Activated CD4-positive, alpha-beta T cell treated with anti-CD3 and anti-CD28 coated beads, Interleukin-2, amount 10 ng/mL, durations not matched to agents 24 days and 14 days (primary cell): ENCODE measurements at regions of chr17 and their contacts with region 1.

Region 1: GRCh38 chr17:3827124-3827773 is 18.8 kb downstream of the NCBP3 start:
- DNase-seq: peak; percentile 91
- H3K4me3 Mint-ChIP-seq: no peak overlapping the region
- H3K27ac Mint-ChIP-seq: no peak overlapping the region
- H3K4me1 Mint-ChIP-seq: peaks cover 11% of the 10 kb centered on the region
- H3K27me3 Mint-ChIP-seq: no peaks in the 10 kb centered on the region

Region 2: GRCh38 chr17:3683054-3683511 is 144.2 kb before region 1 on chr17:
- intact Hi-C with region 1: loop called (anchors 5 kb)
- DNase-seq: peak; percentile 88
- H3K4me3 Mint-ChIP-seq: no peak overlapping the region
- H3K27ac Mint-ChIP-seq: peak overlapping the region; percentile 26
- H3K4me1 Mint-ChIP-seq: peaks cover 22% of the 10 kb centered on the region
- H3K27me3 Mint-ChIP-seq: no peaks in the 10 kb centered on the region

Region 3: DNA sequence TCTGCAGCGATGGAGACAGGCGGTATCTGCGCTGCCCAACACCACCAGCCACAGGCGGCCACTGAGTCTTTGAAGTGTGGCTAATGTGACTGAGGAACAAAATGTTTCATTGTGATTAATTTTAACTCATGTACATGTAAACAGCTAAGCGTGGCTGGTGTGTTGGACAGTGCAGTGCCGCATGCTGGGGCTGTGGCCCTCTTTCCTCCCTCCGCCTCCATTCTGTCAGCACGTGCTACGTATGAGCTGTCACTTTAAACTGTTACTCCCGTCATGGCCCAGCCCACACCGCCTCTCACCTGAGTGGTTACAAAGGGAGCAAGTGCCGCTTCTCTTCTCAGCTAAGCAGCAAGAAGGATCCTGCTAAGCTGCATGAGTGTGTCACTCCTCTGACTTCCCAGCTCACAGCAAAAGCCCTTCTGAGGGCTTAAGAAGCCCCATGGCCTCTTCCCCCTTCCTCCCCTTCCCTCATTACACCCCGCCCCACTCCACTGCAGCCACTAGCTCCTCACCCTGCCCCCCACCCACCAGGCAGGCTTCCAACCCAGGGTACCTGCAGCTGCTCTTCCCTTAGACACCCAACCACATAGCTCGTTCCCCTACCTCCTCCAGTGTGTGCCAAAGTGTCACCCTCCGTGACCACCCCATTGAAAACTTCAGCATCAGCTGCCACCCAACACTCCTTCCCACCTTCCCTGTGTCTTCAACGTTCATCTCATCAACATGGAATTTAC is 88.5 kb before region 1 on chr17:
- intact Hi-C with region 1: loop called (anchors 1 kb)
- DNase-seq: peak; percentile 85
- H3K4me3 Mint-ChIP-seq: peak overlapping the region; percentile 24
- H3K27ac Mint-ChIP-seq: peak overlapping the region; percentile 64
- H3K4me1 Mint-ChIP-seq: peaks cover 35% of the 10 kb centered on the region
- H3K27me3 Mint-ChIP-seq: no peaks in the 10 kb centered on the region

Region 4: DNA sequence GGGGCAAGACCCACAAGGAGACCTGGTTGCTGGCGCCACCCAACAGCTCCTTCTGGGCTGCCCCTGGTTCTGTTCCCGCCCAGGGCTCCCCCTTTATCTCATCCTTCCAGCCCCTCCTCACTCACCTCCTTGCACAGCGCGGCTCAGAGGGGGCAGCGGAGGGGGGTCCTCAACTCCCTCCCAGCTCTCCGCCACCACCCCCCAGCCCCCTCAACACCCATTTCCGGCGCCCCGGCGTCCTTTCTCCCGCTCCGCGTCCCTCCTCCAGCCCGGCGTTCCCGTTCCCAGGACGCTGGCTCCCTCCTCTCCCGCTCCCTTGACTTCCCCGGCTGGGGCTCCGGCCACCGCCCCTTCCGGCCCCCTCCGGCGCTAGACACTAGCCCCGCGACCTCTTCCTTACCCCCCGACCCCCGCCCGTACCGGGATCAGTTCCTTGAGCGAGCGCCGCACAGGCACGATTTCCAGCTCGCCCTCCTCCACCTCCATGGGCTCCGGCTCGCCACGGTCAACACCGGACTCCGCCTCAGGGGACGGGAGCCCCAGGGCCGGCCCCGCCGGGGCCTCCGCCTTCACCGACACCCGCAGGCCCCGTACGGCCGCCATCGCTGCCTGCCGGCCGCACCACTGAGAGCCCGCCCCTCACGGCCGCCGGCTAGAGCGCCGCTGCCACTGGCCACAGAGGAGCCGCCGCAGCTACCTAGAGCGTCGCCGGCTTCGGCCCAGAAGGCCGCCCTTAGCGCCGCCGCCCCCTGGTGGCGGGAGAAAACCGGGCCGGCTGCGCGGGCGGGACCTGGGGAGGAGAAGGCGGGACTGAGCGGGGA is 18.6 kb after region 1 on chr17 and contains the start of gene NCBP3:
- intact Hi-C with region 1: no loop called
- DNase-seq: peak; percentile 98
- H3K4me3 Mint-ChIP-seq: peak within 1 kb of the TSS; percentile 97
- H3K27ac Mint-ChIP-seq: peak within 1 kb of the TSS; percentile 94
- H3K4me1 Mint-ChIP-seq: peaks cover 22% of the 10 kb centered on the region
- H3K27me3 Mint-ChIP-seq: peaks cover 17% of the 10 kb centered on the region
- total RNA-seq, gene NCBP3: 45.9 and 52.1 TPM in 2 replicates